ENCODE measurements at regions of chr1 and their contacts with region 1.

Region 1: GRCh38 chr1:205919026-205919746 is 24.1 kb downstream of the SLC26A9 start:
- DNase-seq: peak; percentile 66 to 76
- H3K4me3 ChIP-seq: no peak overlapping the region
- H3K27ac ChIP-seq: no peak overlapping the region
- H3K4me1 ChIP-seq: no peaks in the 10 kb centered on the region
- H3K27me3 ChIP-seq: no peaks in the 10 kb centered on the region
- CTCF ChIP-seq: peak; percentile 97

Region 2: GRCh38 chr1:205536759-205537361 is 382.3 kb before region 1 on chr1:
- CTCF ChIA-PET with region 1: no interaction called
- POLR2A ChIA-PET with region 1: no interaction called
- intact Hi-C with region 1: no loop called
- DNase-seq: peak; percentile 25 to 62
- H3K4me3 ChIP-seq: no peak overlapping the region
- H3K27ac ChIP-seq: peak overlapping the region; percentile 57
- H3K4me1 ChIP-seq: peaks cover 40% of the 10 kb centered on the region
- H3K27me3 ChIP-seq: no peaks in the 10 kb centered on the region
- CTCF ChIP-seq: no peak

Region 3: DNA sequence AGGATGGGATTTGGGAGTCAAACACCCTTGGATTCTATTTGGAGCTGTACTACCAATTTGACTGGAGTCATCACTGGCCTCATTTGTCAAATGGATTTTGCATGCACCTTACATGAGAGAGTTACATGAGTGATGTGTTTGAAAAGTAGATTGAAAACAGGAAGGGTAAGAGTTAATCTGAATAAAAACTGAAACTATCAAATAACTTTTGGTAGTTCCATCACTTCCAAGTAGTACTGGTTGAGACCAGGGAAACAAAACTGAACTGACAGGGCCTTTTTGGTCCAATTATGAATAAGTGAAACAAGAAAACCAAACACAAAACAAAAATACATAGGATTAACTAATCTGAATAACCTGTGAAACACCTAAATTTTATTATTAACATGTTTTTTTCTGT is 199.4 kb before region 1 on chr1:
- CTCF ChIA-PET with region 1: no interaction called
- POLR2A ChIA-PET with region 1: no interaction called
- intact Hi-C with region 1: no loop called
- DNase-seq: no peak
- H3K4me3 ChIP-seq: no peak overlapping the region
- H3K27ac ChIP-seq: no peak overlapping the region
- H3K4me1 ChIP-seq: no peaks in the 10 kb centered on the region
- H3K27me3 ChIP-seq: no peaks in the 10 kb centered on the region
- CTCF ChIP-seq: no peak

Region 4: GRCh38 chr1:205791568-205792180 is 127.5 kb before region 1 on chr1:
- CTCF ChIA-PET with region 1: interaction called, 6 read pairs
- POLR2A ChIA-PET with region 1: no interaction called
- intact Hi-C with region 1: loop called (anchors 1 kb)
- DNase-seq: peak in 1 of 2 experiments; percentile 63
- H3K4me3 ChIP-seq: no peak overlapping the region
- H3K27ac ChIP-seq: no peak overlapping the region
- H3K4me1 ChIP-seq: no peaks in the 10 kb centered on the region
- H3K27me3 ChIP-seq: no peaks in the 10 kb centered on the region
- CTCF ChIP-seq: peak; percentile 86

Region 5: GRCh38 chr1:205933671-205934618 is 14.8 kb after region 1 on chr1:
- CTCF ChIA-PET with region 1: no interaction called
- POLR2A ChIA-PET with region 1: no interaction called
- intact Hi-C with region 1: no loop called
- DNase-seq: peak; percentile 74 to 99
- H3K4me3 ChIP-seq: peak overlapping the region; percentile 4; the same call in 1 of the 2 replicates
- H3K27ac ChIP-seq: peak overlapping the region; percentile 99
- H3K4me1 ChIP-seq: peaks cover 75% of the 10 kb centered on the region
- H3K27me3 ChIP-seq: no peaks in the 10 kb centered on the region
- CTCF ChIP-seq: no peak

Measured in PC-9 (cell line).